ENCODE measurements at regions of chr1 and their contacts with region 1.

Region 1: DNA sequence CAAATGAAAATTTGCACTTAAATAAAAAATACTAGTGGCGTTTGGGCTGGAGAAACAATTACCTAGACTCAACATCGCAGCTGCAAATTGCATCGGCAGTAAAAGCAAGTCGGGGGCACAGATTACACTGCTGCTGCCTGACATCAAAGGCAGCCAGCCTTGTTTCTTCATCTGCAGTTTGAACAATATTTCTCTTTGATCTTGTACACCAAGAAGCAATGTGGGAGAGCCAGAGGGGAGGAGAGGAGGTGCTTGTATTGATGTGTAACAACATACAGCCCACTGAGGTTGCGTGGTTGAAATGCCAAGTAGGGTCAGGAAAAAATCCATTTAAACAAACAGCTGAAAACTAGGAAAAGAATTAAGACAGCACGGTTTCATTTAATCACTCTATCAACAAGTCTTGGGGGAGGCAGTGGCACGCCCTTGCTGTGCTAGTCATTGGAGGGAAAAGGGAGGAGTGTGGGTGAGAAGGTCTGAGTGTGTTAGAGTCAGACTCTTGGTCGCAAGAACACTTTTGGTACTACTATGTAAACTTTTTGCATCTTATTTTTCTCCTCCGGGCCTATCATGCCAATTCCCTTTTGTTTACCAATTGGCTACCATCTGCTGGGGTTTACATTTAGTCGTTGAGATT is 456.5 kb downstream of the OMA1 start:
- DNase-seq: no peak
- H3K4me3 ChIP-seq: no peak overlapping the region
- H3K27ac ChIP-seq: no peak overlapping the region
- H3K4me1 ChIP-seq: no peaks in the 10 kb centered on the region
- H3K27me3 ChIP-seq: no peaks in the 10 kb centered on the region
- CTCF ChIP-seq: no peak

Region 2: GRCh38 chr1:58013237-58013636 is 76.8 kb before region 1 on chr1:
- CTCF ChIA-PET with region 1: no interaction called
- dilution Hi-C with region 1: loop called (anchors 5 kb)
- in situ Hi-C with region 1: no loop called
- intact Hi-C with region 1: no loop called
- DNase-seq: no peak
- H3K4me3 ChIP-seq: no peak overlapping the region
- H3K27ac ChIP-seq: no peak overlapping the region
- H3K4me1 ChIP-seq: no peaks in the 10 kb centered on the region
- H3K27me3 ChIP-seq: no peaks in the 10 kb centered on the region
- CTCF ChIP-seq: peak in 1 of 2 donors; percentile 44

Region 3: DNA sequence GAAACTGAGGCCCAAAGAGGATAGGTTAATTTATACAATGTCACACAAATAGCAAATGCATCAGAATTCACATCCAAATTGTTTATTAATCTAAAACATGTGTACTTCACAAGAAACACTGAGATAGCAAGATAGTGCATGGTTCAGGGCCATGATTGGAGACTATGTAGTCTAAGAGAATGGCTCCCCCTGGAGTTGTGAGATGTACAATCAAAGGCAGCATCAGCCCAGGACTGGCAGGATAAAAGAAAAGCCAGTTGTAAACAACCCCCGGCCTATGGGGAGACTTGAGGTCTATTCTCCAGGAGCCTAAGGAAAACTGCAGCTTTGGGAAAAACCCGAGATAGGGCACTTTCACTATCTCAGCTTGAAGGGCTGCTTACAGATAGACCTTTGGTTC is 54.5 kb before region 1 on chr1:
- CTCF ChIA-PET with region 1: no interaction called
- dilution Hi-C with region 1: no loop called
- in situ Hi-C with region 1: no loop called
- intact Hi-C with region 1: no loop called
- DNase-seq: no peak
- H3K4me3 ChIP-seq: no peak overlapping the region
- H3K27ac ChIP-seq: no peak overlapping the region
- H3K4me1 ChIP-seq: no peaks in the 10 kb centered on the region
- H3K27me3 ChIP-seq: no peaks in the 10 kb centered on the region
- CTCF ChIP-seq: peak; percentile 9 to 39

Region 4: DNA sequence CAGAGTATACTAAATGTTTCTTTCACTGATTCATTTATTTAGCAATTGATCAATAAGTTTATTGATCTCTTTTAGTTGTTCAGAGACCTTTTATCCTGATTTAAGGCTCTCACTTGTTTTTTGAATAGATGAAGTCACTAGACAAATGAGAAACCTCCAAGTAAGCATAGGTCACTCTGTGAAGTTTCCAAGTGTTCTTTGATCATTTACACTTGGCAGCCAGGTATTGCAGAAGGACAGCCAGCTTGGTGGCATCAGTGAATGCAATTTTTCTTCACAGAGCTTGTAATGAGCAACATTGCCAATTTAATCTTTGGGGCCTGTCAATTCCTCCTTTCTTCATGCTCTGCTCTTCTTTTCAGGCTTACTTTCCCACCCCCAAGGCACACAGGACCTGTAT is 43.5 kb after region 1 on chr1:
- CTCF ChIA-PET with region 1: no interaction called
- dilution Hi-C with region 1: no loop called
- in situ Hi-C with region 1: no loop called
- intact Hi-C with region 1: no loop called
- DNase-seq: no peak
- H3K4me3 ChIP-seq: no peak overlapping the region
- H3K27ac ChIP-seq: no peak overlapping the region
- H3K4me1 ChIP-seq: no peaks in the 10 kb centered on the region
- H3K27me3 ChIP-seq: no peaks in the 10 kb centered on the region
- CTCF ChIP-seq: no peak

Region 5: DNA sequence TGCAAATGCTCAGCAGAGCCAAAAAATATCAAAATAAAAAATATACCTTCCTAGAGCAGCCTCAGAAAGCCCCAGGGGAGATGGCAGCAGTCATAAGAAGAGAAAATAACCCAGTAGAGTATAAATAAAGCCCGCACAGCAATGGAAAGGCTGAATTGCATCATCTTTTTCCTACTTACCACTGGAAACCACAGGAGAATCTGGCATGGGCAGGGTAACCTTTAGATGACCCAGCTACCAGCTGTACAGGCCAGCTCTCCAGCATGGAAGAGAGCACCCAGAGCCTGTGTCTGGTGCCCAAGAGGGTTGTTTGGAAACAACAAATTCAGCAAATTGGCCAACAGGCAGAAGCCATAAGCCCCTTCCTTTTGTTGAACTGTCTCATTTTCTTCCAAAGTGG is 203.4 kb after region 1 on chr1:
- CTCF ChIA-PET with region 1: no interaction called
- dilution Hi-C with region 1: no loop called
- in situ Hi-C with region 1: no loop called
- intact Hi-C with region 1: no loop called
- DNase-seq: no peak
- H3K4me3 ChIP-seq: no peak overlapping the region
- H3K27ac ChIP-seq: no peak overlapping the region
- H3K4me1 ChIP-seq: no peaks in the 10 kb centered on the region
- H3K27me3 ChIP-seq: no peaks in the 10 kb centered on the region
- CTCF ChIP-seq: no peak

Measured in mammary epithelial cell (primary cell).